Activated naive CD4-positive, alpha-beta T cell treated with anti-CD3 and anti-CD28 coated beads for 36 hours (primary cell): ENCODE measurements at regions of chr3 and their contacts with region 1.

Region 1: GRCh38 chr3:194058189-194058571 is 77.8 kb upstream of the HES1 start:
- DNase-seq: peak; percentile 75
- H3K4me3 Mint-ChIP-seq: peak overlapping the region; percentile 58
- H3K27ac Mint-ChIP-seq: no peak overlapping the region
- H3K4me1 Mint-ChIP-seq: peaks cover 10% of the 10 kb centered on the region
- H3K27me3 Mint-ChIP-seq: peaks cover 7% of the 10 kb centered on the region

Region 2: GRCh38 chr3:194070634-194071409 is 12.6 kb after region 1 on chr3:
- CTCF ChIA-PET with region 1: interaction called, 3 read pairs
- intact Hi-C with region 1: loop called (anchors 1 kb)
- DNase-seq: peak; percentile 88
- H3K4me3 Mint-ChIP-seq: peak overlapping the region; percentile 57
- H3K27ac Mint-ChIP-seq: no peak overlapping the region
- H3K4me1 Mint-ChIP-seq: peaks cover 22% of the 10 kb centered on the region
- H3K27me3 Mint-ChIP-seq: peaks cover 19% of the 10 kb centered on the region

Region 3: GRCh38 chr3:194109192-194109863 is 51.1 kb after region 1 on chr3:
- CTCF ChIA-PET with region 1: interaction called, 5 read pairs
- intact Hi-C with region 1: loop called (anchors 2 kb)
- DNase-seq: no peak
- H3K4me3 Mint-ChIP-seq: no peak overlapping the region
- H3K27ac Mint-ChIP-seq: no peak overlapping the region
- H3K4me1 Mint-ChIP-seq: peaks cover 5% of the 10 kb centered on the region
- H3K27me3 Mint-ChIP-seq: peaks cover 3% of the 10 kb centered on the region